ENCODE measurements at regions of chr21 and their contacts with region 1.

Region 1: DNA sequence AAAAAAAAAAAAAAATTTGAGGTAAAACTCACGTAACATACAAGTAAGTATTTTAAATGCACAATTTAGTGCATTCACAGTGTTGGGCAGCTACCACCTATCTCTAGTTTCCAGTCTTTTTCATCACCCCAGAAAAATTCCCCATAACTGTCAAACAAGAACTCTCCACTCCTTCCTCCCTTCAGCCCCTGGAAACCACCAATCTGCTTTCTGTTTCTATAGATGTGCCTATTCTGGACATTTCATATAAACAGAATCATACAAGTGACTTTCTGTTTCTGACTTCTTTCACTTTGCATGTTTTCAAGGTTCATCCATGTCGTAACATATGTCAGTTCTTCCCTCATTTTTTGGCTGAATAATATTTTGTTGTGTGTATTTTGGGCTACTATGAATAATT is 24.9 kb upstream of the ETS2 start:
- DNase-seq: peak; percentile 34
- ATAC-seq: peak; percentile 90
- H3K4me3 ChIP-seq: no peak overlapping the region
- H3K27ac ChIP-seq: no peak overlapping the region
- H3K4me1 ChIP-seq: peaks cover 15% of the 10 kb centered on the region
- H3K27me3 ChIP-seq: no peaks in the 10 kb centered on the region
- CTCF ChIP-seq: no peak
- EP300 ChIP-seq: no peak
- POLR2A ChIP-seq: no peak
- RAD21 ChIP-seq: no peak

Region 2: DNA sequence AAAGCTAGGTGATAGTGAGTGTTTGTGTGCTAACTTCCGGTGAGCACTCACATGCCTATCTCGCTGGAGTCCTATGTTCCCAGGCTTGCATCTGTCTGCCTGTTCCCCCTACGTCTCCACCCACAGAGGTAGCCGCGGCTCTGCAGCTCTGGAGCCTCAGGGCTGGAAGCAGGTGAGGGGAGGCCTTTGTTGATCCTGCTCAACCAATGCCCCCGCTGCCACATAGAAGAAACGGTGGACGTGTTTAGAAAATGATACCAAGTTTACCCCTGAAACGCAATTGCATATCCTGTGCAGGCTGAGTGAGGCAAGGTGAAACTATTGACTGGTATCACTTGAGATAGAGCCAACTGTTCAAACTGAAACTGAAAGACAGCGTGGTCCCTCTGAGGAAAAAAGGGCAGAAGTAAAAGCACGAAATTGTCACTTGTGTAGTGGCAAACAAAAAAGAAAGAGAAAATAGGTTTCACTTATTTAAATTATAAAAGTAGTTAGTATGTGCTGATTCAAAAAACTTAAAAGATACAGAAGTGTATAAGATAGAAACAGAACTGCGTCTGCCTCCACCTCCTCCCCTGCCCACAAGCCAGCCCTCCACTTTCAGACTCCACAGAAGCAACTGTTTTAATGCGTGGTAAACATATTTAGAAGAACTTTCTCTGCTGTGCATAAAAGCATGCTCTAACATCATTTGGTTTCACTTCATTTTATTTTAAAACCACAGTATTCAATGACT is 13.7 kb before region 1 on chr21:
- CTCF ChIA-PET with region 1: interaction called, 4 read pairs
- POLR2A ChIA-PET with region 1: no interaction called
- RAD21 ChIA-PET with region 1: no interaction called
- SMC1A ChIA-PET with region 1: interaction called, 7 read pairs
- in situ Hi-C with region 1: no loop called
- intact Hi-C with region 1: loop called (anchors 1 kb)
- DNase-seq: peak; percentile 96
- ATAC-seq: peak; percentile 96
- H3K4me3 ChIP-seq: peak overlapping the region; percentile 43; the same call in 1 of the 2 replicates
- H3K27ac ChIP-seq: peak overlapping the region; percentile 74
- H3K4me1 ChIP-seq: peaks cover 10% of the 10 kb centered on the region
- H3K27me3 ChIP-seq: no peaks in the 10 kb centered on the region
- CTCF ChIP-seq: no peak
- EP300 ChIP-seq: peak; percentile 50 to 68; a peak in 1 of 4 replicates
- POLR2A ChIP-seq: no peak
- RAD21 ChIP-seq: 0 out of 2 replicates have a peak, but pooled peaks have one; percentile 10